Left ventricle myocardium inferior (tissue), 1 donor: ENCODE measurements at regions of chrX and their contacts with region 1.

Region 1: DNA sequence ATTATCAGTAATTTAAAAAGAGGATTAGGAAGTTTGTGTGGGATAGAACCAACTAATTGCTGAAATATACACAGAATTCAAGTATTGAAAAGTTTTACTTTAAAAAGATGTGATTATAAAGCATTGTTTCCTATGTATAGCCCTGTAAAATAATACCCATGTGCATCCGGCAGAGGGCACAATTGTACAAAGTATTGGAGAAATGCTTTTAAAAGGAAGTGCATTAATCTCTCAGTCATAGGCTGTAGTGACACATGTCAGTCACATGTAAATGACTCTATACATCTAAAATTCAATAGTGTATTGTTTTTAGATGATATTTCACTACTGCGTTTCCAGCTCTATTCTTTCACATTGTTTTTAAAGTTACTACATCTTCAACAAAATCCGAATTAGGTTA is 9.7 kb upstream of the GEMIN8 start:
- DNase-seq: no peak
- H3K4me3 ChIP-seq: no peak overlapping the region
- H3K27ac ChIP-seq: no peak overlapping the region
- H3K4me1 ChIP-seq: no peaks in the 10 kb centered on the region
- H3K27me3 ChIP-seq: no peaks in the 10 kb centered on the region
- CTCF ChIP-seq: peak; percentile 69

Region 2: DNA sequence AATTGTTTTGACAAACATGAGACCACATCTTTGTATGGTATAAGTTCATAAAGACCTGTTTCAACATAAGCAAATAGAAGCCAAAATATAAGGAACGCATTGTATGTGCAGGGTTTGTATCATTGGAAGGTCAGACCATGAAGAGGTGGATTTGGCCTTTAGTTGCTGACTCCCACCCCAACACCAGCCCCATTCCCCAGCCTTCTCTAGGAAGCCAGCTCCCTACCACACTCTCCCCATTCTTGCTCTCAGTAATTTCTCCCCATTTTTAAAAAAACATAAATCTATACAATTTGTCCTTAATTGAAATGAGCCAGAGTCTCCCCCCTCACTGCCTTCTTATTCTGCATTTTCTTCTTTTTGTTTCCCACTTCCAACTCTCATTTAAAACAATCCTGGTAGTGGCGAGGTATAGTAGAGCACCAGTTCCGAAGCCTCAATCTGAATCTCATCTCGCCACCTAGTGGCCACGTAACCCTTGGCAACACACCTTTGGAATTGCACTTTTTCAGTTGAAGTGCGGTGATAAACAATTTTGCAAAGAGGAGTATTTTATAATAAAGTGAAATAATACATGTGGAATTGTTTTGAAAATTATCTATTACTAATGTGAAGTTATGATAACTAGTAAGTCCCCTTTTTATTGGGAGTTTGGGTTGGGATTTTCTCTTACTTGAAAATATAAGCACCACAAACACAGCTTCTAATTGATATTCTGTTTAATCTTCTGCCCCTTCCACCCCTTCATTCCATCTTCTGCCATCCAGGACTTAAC is 1103.9 kb after region 1 on chrX:
- intact Hi-C with region 1: loop called (anchors 10 kb)
- DNase-seq: peak; percentile 13
- H3K4me3 ChIP-seq: no peak overlapping the region
- H3K27ac ChIP-seq: no peak overlapping the region
- H3K4me1 ChIP-seq: no peaks in the 10 kb centered on the region
- H3K27me3 ChIP-seq: no peaks in the 10 kb centered on the region
- CTCF ChIP-seq: peak; percentile 68

Region 3: DNA sequence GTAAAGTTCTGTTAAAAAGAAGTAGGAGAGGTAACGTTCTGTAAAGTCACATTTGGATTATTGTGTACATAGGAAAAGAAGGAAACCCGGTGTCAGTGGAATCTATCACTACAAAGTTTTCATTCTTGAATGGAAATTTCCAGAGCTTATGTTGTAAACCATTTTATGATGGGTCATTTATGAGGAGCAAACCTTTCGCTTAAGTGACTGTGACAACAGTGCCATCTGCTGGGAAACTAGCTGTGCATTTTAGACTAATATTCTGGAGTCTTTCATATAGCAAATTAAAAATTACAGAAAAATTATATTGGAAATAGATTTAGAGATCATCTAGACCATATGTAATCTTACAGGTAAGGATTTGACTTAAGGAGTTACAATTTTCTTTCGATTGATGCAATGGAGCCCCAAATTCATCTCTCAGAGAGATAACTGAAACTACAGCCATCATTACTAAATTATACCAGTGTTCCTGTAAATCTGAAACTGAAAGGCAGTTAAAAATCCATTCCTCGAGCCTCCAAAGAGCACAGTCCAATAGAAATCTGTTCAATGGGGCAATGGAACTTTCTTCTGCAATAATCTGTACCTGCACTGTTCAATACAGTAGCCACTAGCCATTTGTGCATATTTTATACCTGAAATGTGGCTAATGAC is 1203.7 kb after region 1 on chrX:
- intact Hi-C with region 1: loop called (anchors 5 kb)
- DNase-seq: no peak
- H3K4me3 ChIP-seq: no peak overlapping the region
- H3K27ac ChIP-seq: no peak overlapping the region
- H3K4me1 ChIP-seq: no peaks in the 10 kb centered on the region
- H3K27me3 ChIP-seq: no peaks in the 10 kb centered on the region
- CTCF ChIP-seq: peak; percentile 55